GM18951 (cell line): ENCODE measurements at regions of chr11 and their contacts with region 1.

Region 1: GRCh38 chr11:20127671-20128527 is 32.4 kb downstream of the DBX1 start:
- POLR2A ChIP-seq: no peak

Region 2: DNA sequence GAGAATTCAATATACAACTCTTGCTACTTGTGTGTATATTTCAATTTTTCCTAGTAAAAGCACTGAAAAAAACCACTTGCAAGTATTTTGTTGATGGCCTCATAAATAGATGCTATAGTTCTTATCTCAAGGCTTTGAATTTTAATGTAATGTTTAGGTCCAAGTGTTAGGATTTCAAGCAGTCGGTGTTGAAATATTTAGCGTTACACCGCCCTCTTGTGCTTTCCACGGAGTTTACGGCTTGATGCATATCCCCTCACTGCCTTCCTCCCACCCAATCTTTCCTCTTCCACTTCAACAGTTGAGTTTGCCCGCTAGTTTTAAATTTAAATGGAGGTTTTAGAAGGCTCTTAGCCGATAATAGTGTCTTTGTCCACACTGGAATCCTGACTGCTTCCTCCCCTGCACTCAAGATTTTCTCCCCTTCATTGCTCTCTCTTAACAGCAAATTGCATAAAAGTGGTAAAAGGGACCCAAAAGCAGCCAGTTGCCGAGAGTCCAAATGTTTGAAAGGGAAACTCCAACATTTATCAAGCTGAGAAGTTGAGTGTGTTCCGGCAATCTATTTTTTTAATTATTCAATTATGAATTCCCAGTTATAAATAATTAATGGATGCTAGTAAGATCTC is 209.7 kb after region 1 on chr11:
- in situ Hi-C with region 1: loop called (anchors 5 kb)
- POLR2A ChIP-seq: no peak

Region 3: DNA sequence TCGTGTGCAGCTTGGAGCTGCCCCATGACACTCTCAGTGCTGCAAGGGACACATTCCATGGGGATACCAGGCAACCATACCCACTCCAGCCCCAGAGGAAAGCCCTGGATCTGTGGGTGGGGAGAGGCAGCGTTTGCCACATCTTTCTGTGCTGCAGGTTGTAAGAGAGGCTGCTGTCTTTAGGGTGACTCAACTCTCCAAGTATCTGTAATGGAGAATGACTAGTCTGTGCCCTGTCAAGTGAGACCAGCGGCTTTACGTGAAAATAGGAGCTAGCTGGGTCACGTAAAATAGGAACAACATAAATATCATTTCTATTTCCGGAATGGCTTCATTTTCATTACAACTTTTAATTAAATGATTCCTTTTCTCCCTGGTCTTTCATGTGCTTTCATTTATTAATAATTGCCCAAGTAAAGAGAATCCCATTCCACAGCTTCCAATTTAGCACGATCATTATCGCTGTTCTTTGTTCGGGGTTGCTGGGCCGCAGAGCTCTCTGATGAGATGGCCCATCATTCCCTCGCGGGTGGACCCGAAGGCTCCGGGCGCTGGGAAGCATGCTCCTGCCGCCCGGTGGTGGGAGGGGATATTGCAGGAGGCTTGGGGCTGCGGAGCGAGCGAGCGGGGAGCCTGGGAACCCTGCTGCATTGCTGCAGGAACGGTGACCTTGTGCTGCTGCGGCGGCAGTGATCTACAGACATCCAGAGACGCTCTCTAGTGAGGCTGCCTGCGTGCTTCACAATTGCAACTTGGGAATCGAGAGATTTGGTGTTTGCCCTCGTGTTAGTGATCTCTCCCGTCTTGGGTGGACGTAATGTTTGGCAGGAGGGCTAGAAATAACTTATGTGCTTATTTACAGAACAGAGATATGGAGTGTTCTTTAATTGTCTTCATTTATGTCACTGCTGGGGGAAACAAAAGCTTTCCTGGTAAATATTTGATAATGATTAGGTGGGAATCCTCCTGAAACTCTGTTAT is 482.1 kb after region 1 on chr11:
- in situ Hi-C with region 1: loop called (anchors 25 kb)
- POLR2A ChIP-seq: no peak

Region 4: DNA sequence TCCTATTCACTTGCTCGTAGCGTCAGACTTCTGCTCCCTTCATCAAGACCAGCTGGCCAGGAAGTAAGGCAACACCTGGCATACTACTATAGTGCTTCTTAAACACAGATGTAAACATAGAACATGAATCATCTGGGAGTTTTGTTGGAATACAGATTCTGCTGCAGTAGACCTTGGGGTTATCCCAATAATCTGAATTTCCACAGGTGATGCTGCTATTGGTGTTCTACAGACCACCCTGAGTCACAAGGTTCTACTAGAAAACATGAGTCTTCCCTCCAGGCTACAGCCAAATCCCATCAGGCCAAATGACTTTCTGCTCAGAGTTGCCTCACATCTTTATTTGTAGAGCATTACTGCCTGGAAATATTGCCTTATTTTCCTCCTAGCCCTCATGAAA is 716.7 kb after region 1 on chr11:
- in situ Hi-C with region 1: no loop called
- POLR2A ChIP-seq: no peak